GM12878 (cell line): ENCODE measurements at regions of chr18 and their contacts with region 1.

Region 1: DNA sequence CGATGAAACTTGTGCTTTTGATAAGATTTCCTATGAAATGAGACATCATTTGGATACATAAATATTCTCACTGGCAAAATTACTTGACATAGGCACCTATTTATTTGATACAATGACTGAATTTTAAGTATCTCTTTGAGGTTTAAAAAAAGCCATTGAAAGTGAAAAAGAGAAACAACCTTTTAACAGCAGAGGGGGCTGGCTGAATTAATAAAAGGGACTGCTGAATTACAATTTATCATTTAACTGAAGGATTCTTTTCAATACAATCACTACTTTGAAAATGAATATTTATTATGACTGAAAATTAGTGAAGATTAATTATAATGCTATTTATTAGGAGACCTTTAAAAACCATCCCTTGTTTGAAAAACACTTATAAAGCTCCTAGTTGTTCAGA is 335.3 kb downstream of the DLGAP1 start:
- DNase-seq: no peak
- ATAC-seq: no peak
- H3K4me3 ChIP-seq: no peak overlapping the region
- H3K27ac ChIP-seq: no peak overlapping the region
- H3K4me1 ChIP-seq: no peaks in the 10 kb centered on the region
- H3K27me3 ChIP-seq: no peaks in the 10 kb centered on the region
- CTCF ChIP-seq: no peak; a peak in 1 of 6 replicates
- EP300 ChIP-seq: no peak
- POLR2A ChIP-seq: no peak
- RAD21 ChIP-seq: 0 out of 2 replicates have a peak, but pooled peaks have one; percentile 4

Region 2: GRCh38 chr18:4130734-4131719 is 11.2 kb after region 1 on chr18:
- CTCF ChIA-PET with region 1: interaction called, 10 read pairs
- POLR2A ChIA-PET with region 1: interaction called, 3 read pairs
- RAD21 ChIA-PET with region 1: no interaction called
- SMC1A ChIA-PET with region 1: interaction called, 7 read pairs
- in situ Hi-C with region 1: no loop called
- intact Hi-C with region 1: no loop called
- DNase-seq: no peak
- ATAC-seq: no peak
- H3K4me3 ChIP-seq: no peak overlapping the region
- H3K27ac ChIP-seq: no peak overlapping the region
- H3K4me1 ChIP-seq: no peaks in the 10 kb centered on the region
- H3K27me3 ChIP-seq: no peaks in the 10 kb centered on the region
- CTCF ChIP-seq: no peak
- EP300 ChIP-seq: no peak
- POLR2A ChIP-seq: no peak
- RAD21 ChIP-seq: no peak